ENCODE measurements at regions of chr4 and their contacts with region 1.

Region 1: DNA sequence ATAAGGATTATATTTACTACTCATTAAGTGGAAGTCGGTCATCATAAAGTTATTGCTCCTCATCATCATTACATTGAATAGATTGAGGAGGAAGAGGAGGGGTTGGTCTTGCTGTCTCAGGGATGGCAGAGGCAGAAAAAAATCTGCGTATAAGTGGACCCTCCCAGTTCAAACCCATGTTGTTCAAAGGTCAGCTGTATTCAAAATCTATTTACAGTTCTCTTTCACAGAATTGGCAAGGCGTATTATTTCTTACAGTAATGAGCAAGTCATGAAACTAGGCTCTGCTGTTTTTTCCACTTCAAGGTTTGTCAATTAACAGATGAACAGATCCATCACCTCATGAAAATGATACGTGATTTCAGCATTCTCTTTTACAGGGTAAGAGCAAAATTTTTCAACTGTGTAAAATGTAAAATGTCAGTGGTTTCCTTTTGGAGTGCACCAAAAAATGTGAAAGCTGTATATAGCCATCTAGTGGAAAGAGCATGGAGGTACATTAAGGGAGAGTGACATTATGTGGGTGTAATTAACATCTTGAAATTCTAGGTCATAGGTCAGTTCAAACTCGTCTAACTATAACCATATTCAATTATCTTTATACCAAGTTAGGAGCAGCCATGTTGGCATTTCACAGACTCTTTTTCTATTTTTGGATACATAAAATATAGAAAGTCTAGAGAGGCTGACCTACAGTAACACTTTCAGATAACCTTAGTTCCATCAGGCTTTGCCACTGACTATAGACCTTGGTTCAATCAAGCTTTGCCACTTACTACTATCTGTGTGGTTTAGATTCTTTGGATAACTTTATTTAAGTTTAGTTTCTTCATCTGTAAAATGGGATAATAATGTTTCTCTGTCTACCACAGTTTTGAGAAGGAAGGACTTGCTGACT is 30.1 kb downstream of the NEIL3 start:
- DNase-seq: peak; percentile 64
- H3K4me3 ChIP-seq: no peak overlapping the region
- H3K27ac ChIP-seq: no peak overlapping the region
- H3K4me1 ChIP-seq: peaks cover 8% of the 10 kb centered on the region; the same call in 1 of the 2 replicates
- H3K27me3 ChIP-seq: no peaks in the 10 kb centered on the region

Region 2: DNA sequence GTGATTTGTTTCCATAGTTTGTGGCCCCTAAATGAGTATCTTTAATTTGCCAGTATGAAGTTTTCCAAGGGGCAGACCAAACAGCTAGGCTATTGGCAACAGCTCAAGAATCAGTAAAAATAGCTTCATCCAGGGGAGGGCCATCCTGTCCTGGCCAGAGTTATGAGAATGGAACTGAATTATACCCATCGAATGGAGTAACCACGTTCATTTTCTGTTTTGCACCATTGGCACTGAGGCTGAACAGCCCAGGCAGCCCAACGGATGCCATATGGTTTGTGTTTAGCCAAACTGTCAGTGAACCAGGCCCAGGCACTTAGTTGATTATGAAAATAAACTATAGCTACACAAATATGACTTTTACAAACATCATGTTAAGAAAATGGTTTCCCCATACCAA is 1053.0 kb before region 1 on chr4:
- in situ Hi-C with region 1: no loop called
- DNase-seq: no peak
- H3K4me3 ChIP-seq: no peak overlapping the region
- H3K27ac ChIP-seq: no peak overlapping the region
- H3K4me1 ChIP-seq: no peaks in the 10 kb centered on the region
- H3K27me3 ChIP-seq: no peaks in the 10 kb centered on the region

Region 3: DNA sequence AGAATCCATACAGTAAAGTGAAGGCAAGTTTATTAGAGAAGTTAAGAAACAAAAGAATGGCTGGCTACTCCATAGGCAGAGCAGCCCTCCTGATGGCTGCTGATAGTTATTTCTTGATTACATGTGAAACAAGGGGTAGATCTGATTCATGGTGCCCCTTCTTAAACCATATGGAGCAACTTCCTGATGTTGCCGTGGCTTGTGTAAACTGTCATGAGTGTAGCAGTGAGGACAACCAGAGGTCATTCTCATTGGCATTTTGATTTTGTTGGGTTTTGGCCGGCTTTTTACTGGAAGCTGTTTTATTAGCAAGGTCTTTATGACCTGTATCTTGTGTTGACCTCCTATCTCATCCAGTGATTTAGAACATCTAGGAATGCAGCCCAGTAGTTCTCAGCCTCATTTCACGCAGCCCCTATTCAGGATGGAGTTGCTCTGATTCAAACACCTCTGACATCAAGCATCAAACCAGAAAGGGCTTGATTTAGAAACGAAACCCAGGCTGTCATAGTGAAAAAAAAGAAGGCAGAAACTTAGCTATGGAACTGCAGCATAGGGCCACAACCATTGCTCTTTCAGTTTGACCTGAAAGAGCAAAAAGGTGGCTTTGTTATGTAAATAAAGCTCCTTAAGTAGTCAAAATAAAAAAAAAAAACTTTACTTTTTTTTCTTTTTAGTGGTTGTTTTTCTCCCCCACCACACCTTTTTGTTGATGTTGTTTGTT is 982.2 kb before region 1 on chr4:
- in situ Hi-C with region 1: loop called (anchors 25 kb)
- DNase-seq: peak; percentile 4
- H3K4me3 ChIP-seq: no peak overlapping the region
- H3K27ac ChIP-seq: no peak overlapping the region
- H3K4me1 ChIP-seq: peaks cover 25% of the 10 kb centered on the region
- H3K27me3 ChIP-seq: no peaks in the 10 kb centered on the region

Region 4: DNA sequence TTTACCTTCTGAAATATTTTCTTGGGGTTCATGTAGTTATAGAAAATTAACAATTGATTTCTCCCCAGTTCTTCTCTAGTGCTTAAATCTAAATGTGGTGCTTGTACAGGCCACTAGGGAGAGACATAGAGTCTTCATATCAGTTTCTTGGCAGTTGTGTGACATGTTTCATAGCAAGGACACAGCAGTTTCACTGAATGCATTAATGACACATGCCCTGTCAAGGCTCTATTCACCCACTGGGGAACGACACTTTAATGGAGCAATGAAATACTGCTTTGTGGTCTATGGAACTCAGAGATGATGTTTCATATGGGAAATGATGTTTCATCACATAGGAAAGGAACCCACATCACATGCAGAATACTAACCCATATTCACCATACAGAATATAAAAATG is 549.8 kb before region 1 on chr4:
- in situ Hi-C with region 1: loop called (anchors 25 kb)
- DNase-seq: peak; percentile 88
- H3K4me3 ChIP-seq: peak overlapping the region; percentile 89
- H3K27ac ChIP-seq: peak overlapping the region; percentile 85
- H3K4me1 ChIP-seq: peaks cover 63% of the 10 kb centered on the region
- H3K27me3 ChIP-seq: no peaks in the 10 kb centered on the region

Region 5: DNA sequence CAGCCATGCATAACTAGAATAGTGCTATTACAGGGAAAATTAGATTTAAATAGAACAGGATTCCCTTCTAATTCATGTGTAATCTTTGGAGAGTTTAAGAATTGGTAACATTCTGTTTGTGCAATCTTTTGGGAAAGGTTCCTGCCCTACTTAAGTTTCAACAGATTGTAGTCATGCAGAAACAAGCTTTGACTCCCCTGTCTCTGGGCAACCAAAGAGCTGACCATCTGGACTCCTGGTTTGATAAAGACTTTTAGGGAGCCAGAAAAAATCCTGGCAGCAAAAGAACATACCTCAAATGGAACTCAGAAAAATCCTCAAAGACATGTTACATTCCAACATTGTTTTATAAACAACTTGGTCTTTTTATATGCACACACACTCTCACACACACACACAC is 221.1 kb before region 1 on chr4:
- in situ Hi-C with region 1: loop called (anchors 10 kb)
- DNase-seq: peak; percentile 95
- H3K4me3 ChIP-seq: peak overlapping the region; percentile 29
- H3K27ac ChIP-seq: peak overlapping the region; percentile 82
- H3K4me1 ChIP-seq: peaks cover 26% of the 10 kb centered on the region
- H3K27me3 ChIP-seq: no peaks in the 10 kb centered on the region

Region 6: GRCh38 chr4:177250056-177250696 is 89.5 kb before region 1 on chr4:
- in situ Hi-C with region 1: loop called (anchors 5 kb)
- DNase-seq: peak; percentile 79
- H3K4me3 ChIP-seq: peak overlapping the region; percentile 42
- H3K27ac ChIP-seq: no peak overlapping the region
- H3K4me1 ChIP-seq: peaks cover 23% of the 10 kb centered on the region
- H3K27me3 ChIP-seq: no peaks in the 10 kb centered on the region

Measured in GM23248 (cell line).